Mammary epithelial cell (primary cell): ENCODE measurements at regions of chr16 and their contacts with region 1.

Region 1: GRCh38 chr16:68668266-68668665 is 23.2 kb downstream of the CDH3 start:
- DNase-seq: peak; percentile 100
- H3K4me3 ChIP-seq: peak overlapping the region in 1 of 3 experiments; percentile 12
- H3K27ac ChIP-seq: peak overlapping the region; percentile 99
- H3K4me1 ChIP-seq: peaks cover 65% of the 10 kb centered on the region
- H3K27me3 ChIP-seq: no peaks in the 10 kb centered on the region
- CTCF ChIP-seq: no peak

Region 2: DNA sequence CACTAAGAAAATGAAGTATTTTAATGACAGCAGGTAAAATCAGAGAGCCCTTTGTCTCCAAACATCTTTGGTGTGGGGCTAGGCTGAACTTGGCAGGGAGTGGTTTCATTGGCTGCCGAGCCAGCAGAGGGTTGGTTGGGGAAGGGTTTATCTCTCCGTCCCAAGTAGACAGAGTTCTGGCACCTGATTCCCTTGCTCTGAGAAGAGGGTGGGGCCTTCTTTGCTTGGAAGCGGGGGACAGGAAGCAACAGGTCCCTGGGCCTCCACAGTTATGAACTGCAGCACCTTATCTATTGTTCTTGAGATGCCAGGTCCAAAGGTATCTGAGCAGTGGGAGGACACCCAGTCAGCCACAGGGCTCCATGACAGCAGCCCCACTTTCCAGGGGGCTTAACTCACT is 56.5 kb after region 1 on chr16:
- CTCF ChIA-PET with region 1: no interaction called
- dilution Hi-C with region 1: no loop called
- in situ Hi-C with region 1: no loop called
- intact Hi-C with region 1: no loop called
- DNase-seq: no peak
- H3K4me3 ChIP-seq: no peak overlapping the region
- H3K27ac ChIP-seq: no peak overlapping the region
- H3K4me1 ChIP-seq: peaks cover 7% of the 10 kb centered on the region
- H3K27me3 ChIP-seq: no peaks in the 10 kb centered on the region
- CTCF ChIP-seq: no peak

Region 3: GRCh38 chr16:68737046-68737729 is 68.9 kb after region 1 on chr16 and contains the start of gene CDH1:
- CTCF ChIA-PET with region 1: no interaction called
- dilution Hi-C with region 1: loop called (anchors 5 kb)
- in situ Hi-C with region 1: no loop called
- intact Hi-C with region 1: no loop called
- DNase-seq: peak; percentile 89
- H3K4me3 ChIP-seq: peak within 1 kb of the TSS; percentile 88 to 97 (median 93)
- H3K27ac ChIP-seq: peak within 1 kb of the TSS; percentile 97
- H3K4me1 ChIP-seq: peaks cover 38% of the 10 kb centered on the region
- H3K27me3 ChIP-seq: no peaks in the 10 kb centered on the region
- CTCF ChIP-seq: no peak
- total RNA-seq, gene CDH1: 355 to 369 TPM